Left colon (tissue), 2 donors: ENCODE measurements at regions of chr7 and their contacts with region 1.

Region 1: GRCh38 chr7:55271069-55271626 is 94.0 kb upstream of the LANCL2 start:
- DNase-seq: no peak
- ATAC-seq: no peak

Region 2: GRCh38 chr7:55351263-55351662 is 80.1 kb after region 1 on chr7:
- intact Hi-C with region 1: loop called in 1 of 2 experiments (anchors 10 kb)
- DNase-seq: no peak
- ATAC-seq: no peak

Region 3: GRCh38 chr7:55423277-55423711 is 152.1 kb after region 1 on chr7:
- intact Hi-C with region 1: loop called (anchors 5 to 10 kb)
- DNase-seq: no peak
- ATAC-seq: no peak